Panc1 (cell line): ENCODE measurements at regions of chr9 and their contacts with region 1.

Region 1: GRCh38 chr9:5186416-5187169 is 1.2 kb upstream of the INSL6 start:
- DNase-seq: no peak
- ATAC-seq: 0 out of 2 replicates have a peak, but pooled peaks have one; percentile 62
- H3K4me3 ChIP-seq: no peak overlapping the region
- H3K27ac ChIP-seq: no peak overlapping the region
- H3K4me1 ChIP-seq: no peaks in the 10 kb centered on the region
- H3K27me3 ChIP-seq: no peaks in the 10 kb centered on the region
- CTCF ChIP-seq: peak; percentile 66

Region 2: GRCh38 chr9:4762108-4762885 is 424.3 kb before region 1 on chr9:
- CTCF ChIA-PET with region 1: interaction called, 10 read pairs
- POLR2A ChIA-PET with region 1: no interaction called
- in situ Hi-C with region 1: no loop called
- intact Hi-C with region 1: no loop called
- DNase-seq: peak; percentile 32
- ATAC-seq: no peak
- H3K4me3 ChIP-seq: no peak overlapping the region
- H3K27ac ChIP-seq: no peak overlapping the region
- H3K4me1 ChIP-seq: no peaks in the 10 kb centered on the region
- H3K27me3 ChIP-seq: no peaks in the 10 kb centered on the region
- CTCF ChIP-seq: peak; percentile 64

Region 3: GRCh38 chr9:4879112-4879558 is 307.5 kb before region 1 on chr9:
- CTCF ChIA-PET with region 1: no interaction called
- POLR2A ChIA-PET with region 1: no interaction called
- in situ Hi-C with region 1: no loop called
- intact Hi-C with region 1: no loop called
- DNase-seq: no peak
- ATAC-seq: no peak
- H3K4me3 ChIP-seq: no peak overlapping the region
- H3K27ac ChIP-seq: no peak overlapping the region
- H3K4me1 ChIP-seq: no peaks in the 10 kb centered on the region
- H3K27me3 ChIP-seq: no peaks in the 10 kb centered on the region
- CTCF ChIP-seq: no peak

Region 4: DNA sequence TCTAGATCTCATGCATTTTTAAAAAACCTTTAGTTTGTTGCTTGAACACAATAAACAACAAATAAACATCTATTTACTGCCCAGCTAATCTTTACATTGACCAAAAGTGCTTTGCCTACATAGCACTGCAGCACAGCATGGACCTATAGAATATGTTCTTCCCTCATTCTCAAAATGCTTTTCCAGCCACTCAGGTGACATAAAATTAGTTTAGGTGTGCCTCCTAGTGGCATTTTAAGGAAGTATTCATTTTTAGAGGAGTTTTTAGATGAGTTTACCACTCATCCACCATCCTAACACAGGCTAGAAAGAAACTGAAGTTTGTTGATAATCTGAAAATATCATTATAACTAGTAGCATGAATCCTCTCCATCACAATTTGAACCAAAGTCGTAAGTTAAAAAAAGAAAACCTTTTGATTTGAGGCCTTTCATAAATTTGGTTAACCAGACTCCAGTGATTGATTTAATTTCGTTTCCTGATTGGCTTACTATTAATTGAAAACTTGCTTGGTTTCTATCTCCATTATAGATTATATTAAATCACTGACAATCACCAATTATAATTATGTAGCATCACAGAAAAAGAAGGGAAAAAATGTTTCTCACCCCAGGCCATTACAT is 238.5 kb after region 1 on chr9:
- CTCF ChIA-PET with region 1: interaction called, 4 read pairs
- POLR2A ChIA-PET with region 1: no interaction called
- in situ Hi-C with region 1: no loop called
- intact Hi-C with region 1: loop called (anchors 5 kb)
- DNase-seq: no peak
- ATAC-seq: no peak
- H3K4me3 ChIP-seq: no peak overlapping the region
- H3K27ac ChIP-seq: no peak overlapping the region
- H3K4me1 ChIP-seq: no peaks in the 10 kb centered on the region
- H3K27me3 ChIP-seq: no peaks in the 10 kb centered on the region
- CTCF ChIP-seq: peak; percentile 31; the same call in 1 of the 2 replicates

Region 5: GRCh38 chr9:5442400-5443011 is 255.9 kb after region 1 on chr9:
- CTCF ChIA-PET with region 1: no interaction called
- POLR2A ChIA-PET with region 1: no interaction called
- in situ Hi-C with region 1: no loop called
- intact Hi-C with region 1: loop called (anchors 5 kb)
- DNase-seq: no peak
- ATAC-seq: no peak
- H3K4me3 ChIP-seq: no peak overlapping the region
- H3K27ac ChIP-seq: no peak overlapping the region
- H3K4me1 ChIP-seq: no peaks in the 10 kb centered on the region
- H3K27me3 ChIP-seq: no peaks in the 10 kb centered on the region
- CTCF ChIP-seq: peak; percentile 52

Region 6: GRCh38 chr9:5593904-5594303 is 407.3 kb after region 1 on chr9:
- CTCF ChIA-PET with region 1: no interaction called
- POLR2A ChIA-PET with region 1: no interaction called
- in situ Hi-C with region 1: no loop called
- intact Hi-C with region 1: loop called (anchors 5 kb)
- DNase-seq: no peak
- ATAC-seq: no peak
- H3K4me3 ChIP-seq: no peak overlapping the region
- H3K27ac ChIP-seq: no peak overlapping the region
- H3K4me1 ChIP-seq: no peaks in the 10 kb centered on the region
- H3K27me3 ChIP-seq: no peaks in the 10 kb centered on the region
- CTCF ChIP-seq: no peak